ENCODE measurements at regions of chr5 and their contacts with region 1.

Region 1: DNA sequence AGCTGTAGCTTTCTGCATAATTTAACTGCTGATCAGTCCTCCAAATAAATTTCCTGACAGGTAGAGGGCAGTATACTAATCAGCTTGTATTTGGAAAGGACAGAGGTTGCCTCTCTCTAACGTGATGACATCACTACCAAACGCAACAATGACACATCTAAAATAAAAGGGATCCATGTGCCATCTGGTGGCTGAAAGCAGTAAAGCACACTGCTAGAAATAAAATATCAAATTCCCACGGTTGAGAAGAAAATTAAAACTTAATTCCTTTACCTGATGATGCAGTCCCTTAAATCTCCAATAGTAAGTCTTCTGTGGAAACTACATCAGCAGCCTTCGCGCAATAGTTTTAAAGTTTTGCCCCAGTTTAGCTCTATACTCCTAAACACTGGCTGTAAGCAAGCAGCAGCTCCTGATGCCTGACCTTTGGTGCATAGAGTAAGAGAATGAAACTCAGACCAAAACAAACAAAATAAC is 54.5 kb downstream of the DIAPH1 start:
- DNase-seq: peak; percentile 95
- ATAC-seq: peak; percentile 88
- H3K4me3 ChIP-seq: no peak overlapping the region
- H3K27ac ChIP-seq: peak overlapping the region; percentile 76; the same call in 1 of the 2 replicates
- H3K4me1 ChIP-seq: peaks cover 0 to 14% of the 10 kb centered on the region in 2 experiments; a peak in 1 of 4 replicates
- H3K27me3 ChIP-seq: no peaks in the 10 kb centered on the region
- CTCF ChIP-seq: peak; percentile 76 to 99 (median 98)
- POLR2A ChIP-seq: no peak
- RAD21 ChIP-seq: peak; percentile 77

Region 2: DNA sequence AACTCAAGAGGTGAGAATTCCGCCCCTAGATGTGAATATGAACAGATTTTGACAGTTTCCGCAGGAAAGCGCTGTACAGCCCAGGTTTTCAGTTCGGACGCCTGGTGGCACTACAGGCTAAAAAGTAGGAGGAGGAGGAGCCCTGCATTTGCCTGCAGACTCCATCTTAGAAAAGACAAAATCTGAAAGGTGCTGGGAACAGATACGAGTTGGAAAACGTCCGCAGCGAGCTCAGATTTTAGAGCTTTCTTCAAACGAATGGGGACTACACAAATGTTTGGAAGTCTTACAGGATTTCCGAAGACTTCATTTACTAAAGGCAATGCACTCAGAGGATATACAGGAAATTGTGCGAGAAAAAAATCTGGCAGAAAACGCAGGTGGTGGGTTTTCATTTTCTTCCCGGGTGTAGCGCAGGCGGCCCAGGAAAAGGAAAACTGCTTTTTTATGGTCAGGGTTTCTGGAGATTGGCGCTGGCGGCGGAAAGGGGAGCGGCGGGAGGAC is 479.7 kb before region 1 on chr5:
- CTCF ChIA-PET with region 1: no interaction called
- POLR2A ChIA-PET with region 1: no interaction called
- RAD21 ChIA-PET with region 1: no interaction called
- intact Hi-C with region 1: loop called (anchors 10 kb)
- DNase-seq: no peak
- ATAC-seq: no peak
- H3K4me3 ChIP-seq: no peak overlapping the region
- H3K27ac ChIP-seq: no peak overlapping the region
- H3K4me1 ChIP-seq: no peaks in the 10 kb centered on the region
- H3K27me3 ChIP-seq: no peaks in the 10 kb centered on the region
- CTCF ChIP-seq: peak in 1 of 3 experiments; percentile 25; a peak in 1 of 6 replicates
- POLR2A ChIP-seq: no peak
- RAD21 ChIP-seq: peak; percentile 37

Region 3: GRCh38 chr5:141223112-141223783 is 341.0 kb before region 1 on chr5 and contains the start of gene PCDHB14:
- CTCF ChIA-PET with region 1: interaction called, 33 read pairs
- POLR2A ChIA-PET with region 1: interaction called, 4 read pairs
- RAD21 ChIA-PET with region 1: no interaction called
- intact Hi-C with region 1: no loop called
- DNase-seq: peak; percentile 38
- ATAC-seq: no peak
- H3K4me3 ChIP-seq: no peak within 1 kb of the TSS
- H3K27ac ChIP-seq: no peak within 1 kb of the TSS
- H3K4me1 ChIP-seq: no peaks in the 10 kb centered on the region
- H3K27me3 ChIP-seq: no peaks in the 10 kb centered on the region
- CTCF ChIP-seq: peak; percentile 14 to 46 (median 42); a peak in 2 of 6 replicates
- POLR2A ChIP-seq: no peak
- RAD21 ChIP-seq: peak; percentile 69
- total RNA-seq, gene PCDHB14: 0.27 TPM

Region 4: GRCh38 chr5:141359790-141360426 is 204.3 kb before region 1 on chr5 and contains the start of gene PCDHGB2:
- CTCF ChIA-PET with region 1: interaction called, 6 read pairs
- POLR2A ChIA-PET with region 1: no interaction called
- RAD21 ChIA-PET with region 1: no interaction called
- intact Hi-C with region 1: loop called (anchors 1 kb)
- DNase-seq: peak; percentile 40
- ATAC-seq: peak; percentile 55
- H3K4me3 ChIP-seq: no peak within 1 kb of the TSS
- H3K27ac ChIP-seq: no peak within 1 kb of the TSS
- H3K4me1 ChIP-seq: no peaks in the 10 kb centered on the region
- H3K27me3 ChIP-seq: no peaks in the 10 kb centered on the region
- CTCF ChIP-seq: peak; percentile 41 to 67 (median 48); a peak in 5 of 6 replicates
- POLR2A ChIP-seq: no peak
- RAD21 ChIP-seq: peak; percentile 72
- total RNA-seq, gene PCDHGB2: 0.34 TPM

Region 5: DNA sequence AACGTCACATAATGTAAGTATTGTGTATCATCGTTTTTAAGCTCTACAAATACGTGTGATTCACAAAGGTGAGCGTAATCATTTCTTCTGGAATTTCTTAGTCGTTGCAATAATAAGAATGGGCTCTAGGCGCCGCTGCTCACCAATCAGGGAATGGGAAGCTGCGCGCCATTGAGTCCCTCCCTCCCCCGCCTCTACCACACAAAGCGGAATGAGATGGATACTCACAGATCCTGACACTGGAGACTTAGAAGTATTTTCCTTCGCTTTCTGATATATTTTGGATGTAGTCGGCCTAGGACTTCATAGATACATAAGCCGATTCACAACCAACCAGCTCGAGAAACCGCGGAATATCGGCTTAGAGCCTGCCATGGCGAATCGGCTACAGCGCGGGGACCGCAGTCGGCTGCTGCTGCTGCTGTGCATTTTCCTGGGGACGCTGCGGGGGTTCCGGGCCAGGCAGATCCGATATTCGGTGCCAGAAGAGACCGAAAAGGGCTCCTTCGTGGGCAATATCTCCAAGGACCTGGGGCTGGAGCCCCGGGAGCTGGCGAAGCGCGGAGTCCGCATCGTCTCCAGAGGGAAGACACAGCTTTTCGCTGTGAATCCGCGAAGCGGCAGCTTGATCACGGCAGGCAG is 143.3 kb before region 1 on chr5 and contains the start of gene PCDHGA11:
- CTCF ChIA-PET with region 1: interaction called, 11 read pairs
- POLR2A ChIA-PET with region 1: no interaction called
- RAD21 ChIA-PET with region 1: no interaction called
- intact Hi-C with region 1: no loop called
- DNase-seq: peak; percentile 4
- ATAC-seq: no peak
- H3K4me3 ChIP-seq: no peak within 1 kb of the TSS
- H3K27ac ChIP-seq: no peak within 1 kb of the TSS
- H3K4me1 ChIP-seq: no peaks in the 10 kb centered on the region
- H3K27me3 ChIP-seq: no peaks in the 10 kb centered on the region
- CTCF ChIP-seq: peak; percentile 31 to 48 (median 42); a peak in 3 of 6 replicates
- POLR2A ChIP-seq: no peak
- RAD21 ChIP-seq: peak; percentile 59
- total RNA-seq, gene PCDHGA11: 0.39 TPM

Measured in HCT116 (cell line).